ENCODE measurements at regions of chr2 and their contacts with region 1.

Region 1: DNA sequence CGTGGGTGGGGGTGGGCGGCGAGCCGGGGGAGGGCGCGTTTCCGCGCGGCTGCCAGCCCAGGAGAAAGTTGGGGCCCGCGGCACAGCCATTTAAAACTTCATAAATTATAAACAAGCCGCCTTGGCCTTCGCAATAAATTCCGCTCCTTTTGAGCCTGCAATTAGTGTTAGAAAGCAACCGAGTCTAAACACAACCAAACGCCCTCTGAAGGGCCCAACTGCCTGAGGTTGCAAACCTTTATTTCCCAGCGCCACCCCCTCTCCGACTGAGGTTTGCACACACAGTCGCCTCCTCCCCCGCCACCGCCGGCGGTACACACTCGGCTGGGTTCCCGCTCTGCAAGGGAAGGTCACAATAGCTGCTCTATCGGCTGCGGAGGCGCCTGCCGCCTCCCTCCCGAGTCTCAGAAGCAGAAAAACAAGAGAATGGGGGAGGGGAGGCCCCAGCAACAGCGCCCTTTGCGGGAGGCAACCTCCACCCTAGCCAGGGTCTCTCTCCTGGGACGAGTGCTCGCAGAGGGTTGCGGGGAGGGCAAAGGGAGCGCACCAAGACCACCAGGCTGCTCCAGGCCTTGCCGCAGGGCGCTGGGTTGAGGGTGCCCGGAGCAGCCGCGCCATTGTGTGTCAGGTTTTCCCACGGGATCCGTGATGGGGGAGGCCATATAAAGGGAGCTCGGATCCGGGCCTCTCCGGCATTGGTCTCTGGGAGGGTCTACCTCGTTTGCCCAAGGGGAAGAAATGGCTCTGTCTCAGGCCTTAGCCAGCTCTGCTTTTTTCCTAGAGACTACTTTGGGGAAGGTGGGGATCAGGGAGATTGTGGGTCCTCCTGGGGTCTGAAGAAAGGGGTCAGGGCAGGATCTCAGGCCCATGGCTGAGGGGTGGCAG is 13.4 kb upstream of the HOXD1 start:
- DNase-seq: peak; percentile 71

Region 2: DNA sequence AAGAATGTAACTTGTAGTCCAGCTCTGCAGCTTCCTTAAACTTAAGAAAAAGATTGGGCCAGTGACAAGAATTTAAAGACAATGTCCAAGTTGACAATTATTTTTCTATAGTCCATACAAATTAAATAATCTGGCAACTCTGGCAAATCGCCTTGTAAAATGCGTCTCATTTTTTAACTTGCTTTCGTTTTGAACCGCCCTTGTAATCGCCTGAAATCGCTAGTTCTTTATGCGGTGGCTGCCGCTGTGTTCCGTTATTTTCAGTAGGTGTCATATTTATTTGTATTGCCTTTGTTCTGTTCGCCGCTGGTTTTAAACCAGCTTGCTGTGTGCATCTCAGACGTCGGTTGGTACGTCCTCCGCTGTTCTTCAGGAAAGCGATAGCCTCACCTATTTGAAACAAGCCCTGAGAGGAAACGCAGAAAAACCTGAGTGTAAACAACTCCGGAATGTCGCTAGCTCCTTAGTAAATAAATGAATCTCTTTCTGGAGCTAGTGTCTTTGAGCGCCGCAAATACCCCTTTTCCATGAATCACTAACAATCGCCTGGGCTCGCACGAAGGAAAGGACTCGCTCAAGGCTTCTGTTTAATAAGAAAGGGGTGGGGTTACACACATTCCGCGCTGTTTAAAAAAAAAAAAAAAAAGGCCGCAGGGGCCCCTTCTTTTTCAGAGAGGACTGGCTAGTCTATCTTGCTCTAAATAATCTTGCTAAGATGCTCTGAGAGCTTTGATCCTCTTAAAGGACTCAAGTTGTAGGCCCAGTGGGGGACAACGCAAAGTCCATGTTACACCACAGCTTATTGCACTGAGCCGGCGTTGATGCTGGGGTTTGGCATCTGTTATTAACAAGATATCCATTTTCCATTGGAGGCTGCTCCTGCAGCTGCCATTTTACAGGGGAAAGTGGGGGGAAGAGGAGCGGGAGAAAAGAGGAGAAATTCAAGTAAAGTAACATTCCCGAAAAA is 42.6 kb before region 1 on chr2:
- CTCF ChIA-PET with region 1: no interaction called
- POLR2A ChIA-PET with region 1: no interaction called
- DNase-seq: no peak

Region 3: GRCh38 chr2:176164611-176165369 is 10.3 kb before region 1 on chr2:
- CTCF ChIA-PET with region 1: interaction called, 3 read pairs
- POLR2A ChIA-PET with region 1: interaction called, 11 read pairs
- DNase-seq: no peak

Region 4: DNA sequence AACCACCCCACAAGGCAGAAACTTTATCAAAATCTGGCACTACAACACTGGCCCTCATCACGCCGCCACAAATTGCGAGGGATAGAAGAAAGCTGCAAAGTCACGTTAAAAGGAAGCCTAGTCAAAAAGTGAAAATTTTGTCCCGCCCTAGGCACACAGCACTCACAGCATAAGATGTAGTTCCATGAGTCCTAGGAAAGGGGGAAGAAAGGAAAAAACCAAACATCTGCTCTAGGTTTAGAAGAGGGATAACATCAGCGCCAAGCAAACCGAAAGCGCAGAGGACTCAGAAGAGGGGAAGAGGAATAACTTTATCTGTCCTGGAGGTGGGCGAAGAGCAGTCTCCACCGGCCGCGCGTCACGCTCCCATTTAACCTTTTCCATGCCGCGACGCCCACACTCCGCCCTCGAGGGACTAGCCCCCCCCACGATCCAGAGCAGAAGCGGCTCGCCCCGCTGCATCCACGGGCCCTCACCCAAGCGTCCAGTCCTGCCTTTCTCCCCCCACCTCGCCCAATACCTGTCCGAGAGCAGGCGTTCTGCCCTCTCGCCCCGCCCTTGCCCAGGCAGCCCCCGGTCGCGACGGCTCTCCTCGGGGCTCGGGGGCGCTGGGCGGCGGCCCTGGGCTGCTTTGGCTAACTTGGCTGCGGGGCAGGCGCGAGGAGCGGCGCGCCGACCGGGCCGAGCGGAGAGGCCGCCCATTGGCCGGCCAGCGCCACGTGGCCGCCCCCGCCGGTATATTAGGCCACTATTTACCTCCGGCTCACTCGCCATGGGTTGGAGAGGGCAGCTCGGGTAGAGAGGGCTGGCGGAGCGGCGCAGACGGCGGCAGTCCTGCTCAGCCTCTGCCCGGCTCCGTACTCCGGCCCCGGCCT is 13.1 kb after region 1 on chr2 and contains the start of gene HOXD1:
- CTCF ChIA-PET with region 1: interaction called, 3 read pairs
- POLR2A ChIA-PET with region 1: interaction called, 10 read pairs
- DNase-seq: peak; percentile 81

Region 5: DNA sequence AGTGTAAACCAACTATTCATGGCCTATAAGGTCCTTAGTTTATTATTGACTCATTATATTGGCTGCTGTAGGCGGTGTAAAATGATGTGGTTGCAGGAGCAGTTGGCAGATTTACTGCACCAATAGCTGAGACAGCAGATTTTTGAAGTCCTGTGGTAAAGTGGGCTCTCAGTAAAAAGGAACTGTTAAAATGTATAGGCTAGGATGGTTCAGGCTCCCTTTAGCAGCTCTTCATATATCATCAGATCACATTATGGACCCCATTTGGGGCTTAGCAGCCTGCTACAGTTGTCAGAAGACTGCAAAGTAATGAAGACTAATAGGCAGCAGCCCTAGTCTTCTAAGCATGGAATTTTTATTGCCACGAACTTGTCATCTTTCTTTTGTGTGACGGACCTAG is 122.0 kb after region 1 on chr2:
- CTCF ChIA-PET with region 1: no interaction called
- POLR2A ChIA-PET with region 1: no interaction called
- DNase-seq: peak; percentile 66

Region 6: DNA sequence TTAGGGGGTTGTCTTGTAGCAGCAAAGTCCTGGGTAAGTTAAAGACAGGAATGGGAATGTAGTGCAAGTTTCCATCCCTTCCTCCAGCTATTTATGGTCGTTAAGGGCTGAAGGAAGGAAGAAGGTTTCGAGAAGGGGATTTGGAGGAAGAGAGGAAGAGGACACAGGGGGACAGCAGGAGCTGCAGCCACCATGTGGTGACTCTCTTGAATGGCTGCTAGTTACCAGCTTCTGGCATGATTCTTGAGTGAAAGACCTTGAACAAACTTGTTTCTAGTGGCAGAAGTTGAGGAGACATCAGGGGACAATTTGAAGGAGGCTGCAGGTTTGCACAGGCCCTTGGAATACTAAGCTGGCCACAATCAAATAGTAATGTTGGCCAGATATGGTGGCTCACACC is 210.8 kb after region 1 on chr2:
- CTCF ChIA-PET with region 1: no interaction called
- POLR2A ChIA-PET with region 1: no interaction called
- DNase-seq: peak; percentile 22